ENCODE measurements at regions of chr19 and their contacts with region 1.

Region 1: DNA sequence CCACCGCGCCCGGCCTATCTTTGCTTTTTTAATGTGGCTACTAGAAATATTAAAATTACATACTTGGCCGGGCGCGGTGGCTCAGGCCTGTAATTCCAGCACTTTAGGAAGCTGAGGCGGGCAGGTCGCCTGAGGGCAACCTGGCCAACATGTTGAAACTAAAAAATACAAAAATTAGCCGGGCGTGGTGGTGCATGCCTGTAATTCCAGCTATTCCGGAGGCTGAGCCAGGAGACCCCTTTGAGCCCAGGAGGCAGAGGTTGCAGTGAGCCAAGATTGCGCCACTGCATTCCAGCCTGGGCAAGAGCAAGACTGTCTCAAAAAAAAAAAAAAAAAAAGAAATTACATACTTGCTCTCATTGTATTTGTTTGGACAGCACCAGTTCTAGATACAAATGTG is 34.8 kb upstream of the DPRX start:
- DNase-seq: no peak
- H3K4me3 ChIP-seq: no peak overlapping the region
- H3K27ac ChIP-seq: peak overlapping the region; percentile 47; the same call in 1 of the 2 replicates
- H3K4me1 ChIP-seq: peaks cover 4 to 28% (median 20%) of the 10 kb centered on the region in 4 experiments
- H3K27me3 ChIP-seq: no peaks in the 10 kb centered on the region
- CTCF ChIP-seq: no peak
- EP300 ChIP-seq: no peak
- POLR2A ChIP-seq: no peak
- RAD21 ChIP-seq: no peak

Region 2: GRCh38 chr19:53532362-53532761 is 64.7 kb before region 1 on chr19:
- CTCF ChIA-PET with region 1: no interaction called
- POLR2A ChIA-PET with region 1: no interaction called
- DNase-seq: no peak
- H3K4me3 ChIP-seq: no peak overlapping the region
- H3K27ac ChIP-seq: no peak overlapping the region
- H3K4me1 ChIP-seq: no peaks in the 10 kb centered on the region
- H3K27me3 ChIP-seq: no peaks in the 10 kb centered on the region
- CTCF ChIP-seq: no peak
- EP300 ChIP-seq: no peak
- POLR2A ChIP-seq: no peak
- RAD21 ChIP-seq: no peak

Region 3: GRCh38 chr19:53580976-53581800 is 15.8 kb before region 1 on chr19:
- CTCF ChIA-PET with region 1: interaction called, 6 read pairs
- POLR2A ChIA-PET with region 1: interaction called, 14 read pairs
- DNase-seq: peak in 1 of 2 experiments; percentile 49
- H3K4me3 ChIP-seq: no peak overlapping the region
- H3K27ac ChIP-seq: no peak overlapping the region
- H3K4me1 ChIP-seq: peaks cover 0 to 11% (median 8%) of the 10 kb centered on the region in 4 experiments; a peak in 4 of 7 replicates
- H3K27me3 ChIP-seq: no peaks in the 10 kb centered on the region
- CTCF ChIP-seq: no peak
- EP300 ChIP-seq: no peak
- POLR2A ChIP-seq: no peak
- RAD21 ChIP-seq: no peak

Region 4: DNA sequence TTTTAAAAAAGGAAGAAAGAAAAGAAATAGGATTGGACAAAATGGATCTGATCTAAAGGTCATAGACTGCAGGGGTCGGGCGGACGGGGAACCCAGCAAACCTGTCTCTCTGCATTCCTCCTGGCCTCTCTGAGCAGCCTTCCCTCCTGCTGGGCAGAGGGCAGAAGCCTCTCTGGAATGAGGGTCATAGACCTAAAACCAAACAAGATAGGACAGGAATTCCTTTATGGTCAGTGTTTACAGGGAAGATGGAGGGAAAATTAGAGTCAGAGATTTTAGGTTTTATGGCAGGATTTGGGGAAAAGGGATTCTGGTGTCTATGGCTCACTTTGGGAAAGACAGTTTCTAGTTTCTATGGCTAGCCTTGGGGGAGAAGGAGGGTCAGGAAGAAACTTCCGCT is 15.7 kb after region 1 on chr19:
- CTCF ChIA-PET with region 1: interaction called, 14 read pairs
- POLR2A ChIA-PET with region 1: interaction called, 15 read pairs
- DNase-seq: peak; percentile 38 to 77
- H3K4me3 ChIP-seq: peak overlapping the region in 1 of 4 experiments; percentile 29; a peak in 1 of 8 replicates
- H3K27ac ChIP-seq: peak overlapping the region; percentile 77
- H3K4me1 ChIP-seq: peaks cover 0 to 10% (median 6%) of the 10 kb centered on the region in 4 experiments; a peak in 6 of 7 replicates
- H3K27me3 ChIP-seq: no peaks in the 10 kb centered on the region
- CTCF ChIP-seq: no peak
- EP300 ChIP-seq: peak in 1 of 2 experiments; percentile 91; a peak in 1 of 3 replicates
- POLR2A ChIP-seq: peak in 1 of 2 experiments; percentile 45; a peak in 1 of 3 replicates
- RAD21 ChIP-seq: peak in 1 of 2 experiments; percentile 21; a peak in 1 of 4 replicates